ENCODE measurements at regions of chr15 and their contacts with region 1.

Region 1: DNA sequence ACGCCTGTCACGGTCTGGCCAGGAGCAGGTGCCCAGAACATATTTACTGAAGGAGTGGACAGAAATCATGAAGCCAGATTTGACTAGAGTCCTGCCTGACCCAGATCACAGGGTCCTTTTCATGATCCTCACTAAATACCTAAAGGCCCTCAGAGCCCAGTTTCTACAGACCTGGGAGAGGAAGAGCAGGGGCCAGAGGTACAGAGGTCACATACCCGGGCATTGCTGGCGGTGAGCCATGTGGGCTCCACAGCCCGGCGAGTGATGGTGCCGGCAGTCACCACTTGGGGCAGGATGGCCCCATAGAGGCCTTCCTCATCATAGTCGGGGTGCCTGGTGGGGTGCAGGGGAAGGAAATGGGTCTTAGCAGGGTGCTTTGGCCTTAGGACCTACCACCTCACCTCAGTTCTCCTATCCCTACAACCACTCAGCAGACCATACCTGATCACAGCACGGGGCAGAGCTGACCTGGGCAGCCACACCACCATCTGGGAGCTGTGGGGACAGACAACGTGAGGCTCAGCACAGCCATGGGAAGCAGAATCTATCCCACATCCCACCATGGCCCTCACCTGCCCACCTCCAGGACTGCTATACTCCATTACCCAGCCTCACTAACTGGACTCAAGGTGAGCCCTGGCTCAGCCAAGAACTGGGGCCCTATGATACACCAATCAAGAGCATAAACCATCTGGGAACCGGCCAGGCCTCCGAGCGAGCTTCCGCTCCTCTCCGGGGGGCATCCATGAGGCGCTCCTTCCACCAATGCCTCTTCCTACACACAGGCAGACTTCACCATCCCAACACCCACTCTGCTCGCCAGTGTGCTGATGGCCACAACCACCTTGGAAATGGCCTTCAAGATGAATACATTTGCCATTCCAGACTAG is 12.9 kb downstream of the POLG start:
- DNase-seq: peak; percentile 50
- H3K4me3 ChIP-seq: no peak overlapping the region
- H3K27ac ChIP-seq: no peak overlapping the region
- H3K4me1 ChIP-seq: no peaks in the 10 kb centered on the region
- H3K27me3 ChIP-seq: no peaks in the 10 kb centered on the region
- CTCF ChIP-seq: no peak
- EP300 ChIP-seq: no peak
- RAD21 ChIP-seq: no peak

Region 2: GRCh38 chr15:89334510-89335288 is 12.9 kb after region 1 on chr15 and contains the start of gene POLG:
- CTCF ChIA-PET with region 1: interaction called, 11 read pairs
- POLR2A ChIA-PET with region 1: no interaction called
- DNase-seq: peak; percentile 97
- H3K4me3 ChIP-seq: peak within 1 kb of the TSS; percentile 80 to 87
- H3K27ac ChIP-seq: peak within 1 kb of the TSS; percentile 76 to 95
- H3K4me1 ChIP-seq: peaks cover 18 to 44% of the 10 kb centered on the region in 2 experiments
- H3K27me3 ChIP-seq: no peaks in the 10 kb centered on the region
- CTCF ChIP-seq: no peak
- EP300 ChIP-seq: peak; percentile 37 to 69; a peak in 2 of 4 replicates
- RAD21 ChIP-seq: no peak
- polyA plus RNA-seq, gene POLG: 24.9 and 25.1 TPM in 2 replicates

Measured in SK-N-SH (cell line).